ENCODE measurements at regions of chr5 and their contacts with region 1.

Region 1: GRCh38 chr5:10441083-10441991 is at the start of gene ROPN1L:
- DNase-seq: peak; percentile 73 to 96
- H3K4me3 ChIP-seq: peak within 1 kb of the TSS; percentile 43
- CTCF ChIP-seq: no peak
- POLR2A ChIP-seq: no peak
- total RNA-seq, gene ROPN1L: 0.71 to 4.0 (median 1.0) TPM in 3 of 4 donors, not detected in the other

Region 2: GRCh38 chr5:10761166-10761932 is 320.0 kb after region 1 on chr5 and contains the start of gene DAP:
- intact Hi-C with region 1: loop called (anchors 10 kb)
- DNase-seq: peak; percentile 80 to 97
- H3K4me3 ChIP-seq: peak within 1 kb of the TSS; percentile 70
- CTCF ChIP-seq: no peak
- POLR2A ChIP-seq: peak in 1 of 2 donors; percentile 8
- total RNA-seq, gene DAP: 36.4 to 41.9 (median 39.7) TPM